ENCODE measurements at regions of chr15 and their contacts with region 1.

Region 1: DNA sequence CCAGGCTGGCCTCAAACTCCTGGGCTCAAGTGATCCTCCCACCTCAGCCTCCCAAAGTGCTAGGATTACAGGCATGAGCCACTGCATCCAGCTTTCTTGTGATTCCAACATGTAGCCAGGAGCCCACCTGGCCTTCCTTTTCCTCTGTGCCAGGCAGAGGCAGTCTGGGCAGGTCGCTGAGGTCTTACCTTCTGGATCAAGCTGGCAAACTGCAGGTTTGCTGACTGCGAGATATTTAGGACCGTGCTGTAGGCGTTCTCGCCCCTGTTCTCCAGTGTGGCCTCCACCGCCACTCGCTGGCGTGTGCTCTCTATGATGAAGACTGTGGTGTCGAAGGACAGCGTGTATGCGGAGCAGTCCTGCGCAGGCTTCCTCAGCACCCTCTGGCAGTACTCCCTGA is 42.5 kb downstream of the FEM1B start:
- DNase-seq: no peak
- H3K4me3 ChIP-seq: no peak overlapping the region
- H3K27ac ChIP-seq: no peak overlapping the region
- H3K4me1 ChIP-seq: no peaks in the 10 kb centered on the region
- H3K27me3 ChIP-seq: no peaks in the 10 kb centered on the region
- CTCF ChIP-seq: no peak
- POLR2A ChIP-seq: no peak

Region 2: DNA sequence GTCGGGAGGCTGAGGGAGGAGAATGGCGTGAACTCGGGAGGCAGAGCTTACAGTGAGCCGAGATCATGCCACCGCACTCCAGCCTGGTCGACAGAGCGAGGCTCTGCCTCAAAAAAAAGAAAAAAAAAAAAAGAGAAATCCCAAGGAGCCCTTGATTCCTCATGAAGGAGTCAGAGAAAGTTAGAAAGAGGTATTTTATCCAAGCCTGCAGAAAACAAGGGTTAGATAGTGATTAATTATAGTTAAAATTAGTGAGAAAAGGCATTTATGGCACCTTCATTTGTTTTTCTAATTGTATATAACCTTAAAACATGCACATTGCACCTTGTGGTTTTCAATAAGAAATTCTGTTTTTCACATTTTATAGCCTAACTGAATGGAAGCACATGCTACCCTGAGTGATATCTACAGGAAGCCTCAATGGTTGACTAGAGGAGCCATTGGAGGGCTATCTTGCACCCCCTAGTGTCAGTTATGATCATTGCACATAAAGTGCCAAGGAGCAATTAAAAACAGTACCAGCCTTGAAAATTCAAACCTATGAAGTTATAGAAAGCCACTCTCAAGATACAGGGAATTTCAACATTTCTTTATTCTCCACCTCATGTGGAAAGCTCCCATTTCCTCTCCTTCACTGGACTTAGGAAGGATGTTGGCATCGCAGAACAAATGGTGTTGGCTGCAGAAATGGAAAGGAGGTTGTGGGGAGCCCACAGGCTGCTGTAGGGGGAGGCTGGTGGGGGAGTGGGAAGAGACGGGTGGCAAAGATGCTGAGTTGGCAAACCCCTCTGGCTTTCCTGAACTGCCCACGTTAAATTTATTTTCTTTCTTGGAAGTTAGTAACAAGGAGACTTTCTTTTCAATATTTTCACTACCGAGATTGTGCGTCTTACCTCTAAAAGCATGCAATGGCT is 63.4 kb after region 1 on chr15:
- intact Hi-C with region 1: loop called (anchors 5 kb)
- DNase-seq: no peak
- H3K4me3 ChIP-seq: no peak overlapping the region
- H3K27ac ChIP-seq: peak overlapping the region in 1 of 2 donors; percentile 26
- H3K4me1 ChIP-seq: peaks cover 0 to 11% of the 10 kb centered on the region in 2 donors
- H3K27me3 ChIP-seq: no peaks in the 10 kb centered on the region
- CTCF ChIP-seq: peak; percentile 40 to 78 (median 71)
- POLR2A ChIP-seq: no peak

Region 3: DNA sequence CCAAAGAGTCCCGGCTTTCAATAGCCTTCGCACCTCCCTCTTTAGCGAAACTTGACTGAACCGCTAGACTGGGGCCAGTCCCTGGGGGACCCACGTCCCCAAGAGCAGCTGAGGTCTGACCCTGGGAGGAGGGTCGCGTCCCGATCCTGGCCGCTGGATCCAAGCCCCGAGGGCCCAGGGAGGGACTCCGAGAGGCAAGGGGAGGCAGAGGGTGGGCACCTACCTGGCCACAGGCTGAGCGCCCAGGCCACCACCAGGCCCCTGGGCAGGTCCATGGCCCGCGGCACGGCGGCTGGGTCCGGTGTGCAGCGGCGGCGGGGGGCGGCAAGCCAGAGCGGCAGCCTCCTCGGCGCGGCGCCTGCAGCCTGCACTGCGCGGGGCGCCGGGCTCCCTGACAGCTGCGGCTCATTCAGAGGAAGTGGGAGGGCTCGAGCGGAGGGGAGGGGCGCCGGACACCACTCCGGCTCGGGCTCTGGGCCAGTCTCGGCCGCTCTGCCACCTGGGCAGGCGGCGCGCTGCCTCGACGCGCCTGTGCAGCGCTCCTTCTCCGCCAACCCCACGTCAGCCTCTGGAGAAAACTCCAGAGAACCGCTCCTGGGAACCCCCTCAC is 111.9 kb after region 1 on chr15 and contains the start of gene ITGA11:
- intact Hi-C with region 1: no loop called
- DNase-seq: peak in 1 of 2 donors; percentile 48
- H3K4me3 ChIP-seq: peak within 1 kb of the TSS; percentile 59 to 80 (median 61)
- H3K27ac ChIP-seq: peak within 1 kb of the TSS; percentile 68
- H3K4me1 ChIP-seq: peaks cover 0 to 5% of the 10 kb centered on the region in 2 donors
- H3K27me3 ChIP-seq: peaks cover 0 to 33% of the 10 kb centered on the region in 2 donors
- CTCF ChIP-seq: no peak
- POLR2A ChIP-seq: no peak
- total RNA-seq, gene ITGA11: 7.8 to 8.5 (median 7.9) TPM

Measured in breast epithelium (tissue), 4 donors.